ENCODE measurements at regions of chr5 and their contacts with region 1.

Region 1: GRCh38 chr5:122101636-122102285 is 23.7 kb upstream of the LOX start:
- DNase-seq: peak; percentile 48
- H3K4me3 ChIP-seq: no peak overlapping the region
- H3K27ac ChIP-seq: no peak overlapping the region
- H3K4me1 ChIP-seq: no peaks in the 10 kb centered on the region
- CTCF ChIP-seq: peak; percentile 79

Region 2: DNA sequence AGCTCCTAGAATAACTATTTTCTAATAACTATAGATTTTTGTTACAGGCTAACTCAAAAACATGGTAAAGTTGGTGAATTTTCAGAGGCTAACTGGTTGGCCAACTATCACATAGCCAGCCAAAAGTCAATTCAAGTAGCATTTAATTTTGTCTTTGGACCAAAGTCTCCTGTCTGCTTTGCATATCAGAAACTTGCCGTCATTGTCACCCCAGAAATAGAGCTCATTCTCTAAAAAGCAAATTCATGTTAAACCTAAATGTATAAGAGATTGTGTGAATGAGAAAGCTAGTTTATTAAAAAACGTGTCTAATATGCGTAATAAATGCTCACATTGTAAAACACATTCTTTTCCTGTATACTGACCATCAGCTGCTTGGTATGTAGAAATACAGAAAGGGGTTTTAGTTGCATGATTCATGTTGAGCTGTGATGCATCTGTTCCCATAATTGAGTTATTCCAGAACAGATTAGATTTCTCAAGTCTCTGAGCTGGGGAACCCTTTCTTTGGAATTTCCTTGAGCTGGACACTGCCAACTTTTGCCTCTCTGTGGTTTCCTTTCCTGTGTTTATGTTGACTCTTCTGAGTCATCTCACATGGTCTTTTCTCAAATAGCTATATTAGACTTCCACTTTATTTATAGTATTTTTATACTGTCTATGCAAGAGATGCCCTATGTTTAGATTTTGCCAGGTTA is 132.7 kb before region 1 on chr5:
- CTCF ChIA-PET with region 1: no interaction called
- POLR2A ChIA-PET with region 1: no interaction called
- intact Hi-C with region 1: loop called (anchors 10 kb)
- DNase-seq: no peak
- H3K4me3 ChIP-seq: no peak overlapping the region
- H3K27ac ChIP-seq: no peak overlapping the region
- H3K4me1 ChIP-seq: peaks cover 6% of the 10 kb centered on the region
- CTCF ChIP-seq: no peak

Region 3: GRCh38 chr5:121987685-121988073 is 114.1 kb before region 1 on chr5:
- CTCF ChIA-PET with region 1: no interaction called
- POLR2A ChIA-PET with region 1: no interaction called
- intact Hi-C with region 1: no loop called
- DNase-seq: no peak
- H3K4me3 ChIP-seq: no peak overlapping the region
- H3K27ac ChIP-seq: no peak overlapping the region
- H3K4me1 ChIP-seq: no peaks in the 10 kb centered on the region
- CTCF ChIP-seq: no peak